PC-9 (cell line): ENCODE measurements at regions of chr12 and their contacts with region 1.

Region 1: DNA sequence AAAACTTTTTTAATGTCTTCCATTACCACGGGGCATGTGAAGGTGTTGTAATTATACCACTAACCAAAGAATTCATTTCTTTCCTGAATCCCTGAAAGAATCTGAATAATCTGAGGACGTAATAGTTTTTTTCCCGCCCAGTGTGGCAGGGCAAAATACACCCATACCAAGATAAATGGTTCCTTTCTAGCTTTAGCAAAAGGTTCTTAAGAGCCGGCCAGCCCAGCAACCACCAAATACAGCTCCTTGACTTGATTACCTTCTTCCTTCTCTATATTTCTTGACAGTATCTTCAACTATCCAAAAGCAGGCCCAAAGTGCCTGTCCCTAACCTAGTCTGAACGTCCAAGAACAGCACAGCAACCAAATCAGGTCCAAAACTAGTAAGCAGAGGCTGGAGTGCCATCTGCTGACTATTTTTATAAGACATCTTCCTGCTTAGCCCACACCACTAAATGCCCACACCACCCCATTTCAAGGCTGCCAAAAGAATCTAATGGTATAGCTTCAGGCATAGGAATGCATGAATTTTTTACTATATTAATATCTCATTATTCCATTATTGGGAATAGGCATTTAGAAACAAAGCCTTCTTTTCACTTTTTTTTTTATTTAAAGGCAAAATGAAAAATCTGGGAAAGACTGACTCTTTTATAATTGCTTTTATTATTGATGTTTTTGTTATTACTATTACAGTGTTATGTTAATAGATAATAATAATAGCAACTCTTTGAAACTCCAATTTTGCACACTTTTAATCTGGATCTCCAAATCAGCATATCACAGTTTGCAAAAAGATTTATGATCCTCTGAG is 524.4 kb downstream of the MED13L start:
- DNase-seq: no peak
- H3K4me3 ChIP-seq: no peak overlapping the region
- H3K27ac ChIP-seq: no peak overlapping the region
- H3K4me1 ChIP-seq: no peaks in the 10 kb centered on the region
- H3K27me3 ChIP-seq: peaks cover 52% of the 10 kb centered on the region
- CTCF ChIP-seq: peak; percentile 69

Region 2: GRCh38 chr12:113980537-113981337 is 1772.4 kb before region 1 on chr12:
- CTCF ChIA-PET with region 1: no interaction called
- POLR2A ChIA-PET with region 1: no interaction called
- intact Hi-C with region 1: loop called (anchors 2 kb)
- DNase-seq: peak in 1 of 2 experiments; percentile 18
- H3K4me3 ChIP-seq: no peak overlapping the region
- H3K27ac ChIP-seq: no peak overlapping the region
- H3K4me1 ChIP-seq: no peaks in the 10 kb centered on the region
- H3K27me3 ChIP-seq: peaks cover 44% of the 10 kb centered on the region
- CTCF ChIP-seq: peak; percentile 99

Region 3: GRCh38 chr12:114662512-114663177 is 1090.5 kb before region 1 on chr12:
- CTCF ChIA-PET with region 1: no interaction called
- POLR2A ChIA-PET with region 1: no interaction called
- intact Hi-C with region 1: loop called (anchors 1 kb)
- DNase-seq: peak; percentile 58 to 60
- H3K4me3 ChIP-seq: no peak overlapping the region
- H3K27ac ChIP-seq: no peak overlapping the region
- H3K4me1 ChIP-seq: no peaks in the 10 kb centered on the region
- H3K27me3 ChIP-seq: peaks cover 8% of the 10 kb centered on the region; the same call in 1 of the 2 replicates
- CTCF ChIP-seq: peak; percentile 91

Region 4: DNA sequence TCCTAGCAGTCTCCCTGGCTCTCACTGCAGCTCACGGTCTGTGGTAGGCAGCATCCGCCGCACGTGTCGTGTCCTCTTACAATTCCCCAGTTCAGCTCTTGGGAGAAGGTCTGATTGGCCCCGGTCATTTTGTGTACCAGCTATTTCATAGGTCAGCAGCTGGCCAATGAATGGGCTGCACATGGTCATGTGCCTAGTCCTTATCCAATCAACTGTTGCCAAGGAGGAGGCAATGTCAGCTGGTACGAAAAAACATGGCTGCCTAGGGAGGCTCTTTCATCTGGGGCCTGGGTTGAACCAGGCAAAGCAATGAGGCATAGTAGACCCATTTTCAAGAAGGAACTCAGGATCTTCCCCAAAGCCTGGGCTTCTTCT is 1031.1 kb after region 1 on chr12:
- CTCF ChIA-PET with region 1: no interaction called
- POLR2A ChIA-PET with region 1: no interaction called
- intact Hi-C with region 1: no loop called
- DNase-seq: no peak
- H3K4me3 ChIP-seq: no peak overlapping the region
- H3K27ac ChIP-seq: no peak overlapping the region
- H3K4me1 ChIP-seq: no peaks in the 10 kb centered on the region
- H3K27me3 ChIP-seq: no peaks in the 10 kb centered on the region
- CTCF ChIP-seq: no peak